GM12878 (cell line): ENCODE measurements at regions of chr18 and their contacts with region 1.

Region 1: GRCh38 chr18:35478520-35479435 is 19.0 kb downstream of the INO80C start:
- DNase-seq: no peak
- ATAC-seq: peak; percentile 88
- H3K4me3 ChIP-seq: no peak overlapping the region
- H3K27ac ChIP-seq: no peak overlapping the region
- H3K4me1 ChIP-seq: no peaks in the 10 kb centered on the region
- H3K27me3 ChIP-seq: no peaks in the 10 kb centered on the region
- CTCF ChIP-seq: no peak
- EP300 ChIP-seq: no peak
- POLR2A ChIP-seq: no peak
- RAD21 ChIP-seq: no peak

Region 2: GRCh38 chr18:35415511-35416073 is 63.2 kb before region 1 on chr18:
- CTCF ChIA-PET with region 1: interaction called, 11 read pairs
- POLR2A ChIA-PET with region 1: interaction called, 8 read pairs
- RAD21 ChIA-PET with region 1: interaction called, 9 read pairs
- SMC1A ChIA-PET with region 1: interaction called, 29 read pairs
- in situ Hi-C with region 1: no loop called
- intact Hi-C with region 1: no loop called
- DNase-seq: no peak
- ATAC-seq: peak; percentile 71
- H3K4me3 ChIP-seq: peak overlapping the region; percentile 8; the same call in 1 of the 2 replicates
- H3K27ac ChIP-seq: peak overlapping the region; percentile 51
- H3K4me1 ChIP-seq: peaks cover 27% of the 10 kb centered on the region
- H3K27me3 ChIP-seq: no peaks in the 10 kb centered on the region
- CTCF ChIP-seq: no peak
- EP300 ChIP-seq: no peak
- POLR2A ChIP-seq: no peak
- RAD21 ChIP-seq: no peak

Region 3: GRCh38 chr18:35435401-35435800 is 43.4 kb before region 1 on chr18:
- CTCF ChIA-PET with region 1: no interaction called
- POLR2A ChIA-PET with region 1: no interaction called
- RAD21 ChIA-PET with region 1: no interaction called
- SMC1A ChIA-PET with region 1: no interaction called
- in situ Hi-C with region 1: no loop called
- intact Hi-C with region 1: no loop called
- DNase-seq: no peak
- ATAC-seq: no peak
- H3K4me3 ChIP-seq: no peak overlapping the region
- H3K27ac ChIP-seq: no peak overlapping the region
- H3K4me1 ChIP-seq: no peaks in the 10 kb centered on the region
- H3K27me3 ChIP-seq: no peaks in the 10 kb centered on the region
- CTCF ChIP-seq: no peak
- EP300 ChIP-seq: no peak
- POLR2A ChIP-seq: no peak
- RAD21 ChIP-seq: no peak

Region 4: GRCh38 chr18:35467624-35468016 is 11.2 kb before region 1 on chr18:
- CTCF ChIA-PET with region 1: interaction called, 12 read pairs
- POLR2A ChIA-PET with region 1: interaction called, 18 read pairs
- RAD21 ChIA-PET with region 1: interaction called, 13 read pairs
- SMC1A ChIA-PET with region 1: interaction called, 67 read pairs
- in situ Hi-C with region 1: no loop called
- intact Hi-C with region 1: no loop called
- DNase-seq: peak; percentile 19
- ATAC-seq: peak; percentile 87
- H3K4me3 ChIP-seq: no peak overlapping the region
- H3K27ac ChIP-seq: no peak overlapping the region
- H3K4me1 ChIP-seq: peaks cover 17% of the 10 kb centered on the region
- H3K27me3 ChIP-seq: no peaks in the 10 kb centered on the region
- CTCF ChIP-seq: no peak
- EP300 ChIP-seq: no peak
- POLR2A ChIP-seq: no peak
- RAD21 ChIP-seq: no peak

Region 5: DNA sequence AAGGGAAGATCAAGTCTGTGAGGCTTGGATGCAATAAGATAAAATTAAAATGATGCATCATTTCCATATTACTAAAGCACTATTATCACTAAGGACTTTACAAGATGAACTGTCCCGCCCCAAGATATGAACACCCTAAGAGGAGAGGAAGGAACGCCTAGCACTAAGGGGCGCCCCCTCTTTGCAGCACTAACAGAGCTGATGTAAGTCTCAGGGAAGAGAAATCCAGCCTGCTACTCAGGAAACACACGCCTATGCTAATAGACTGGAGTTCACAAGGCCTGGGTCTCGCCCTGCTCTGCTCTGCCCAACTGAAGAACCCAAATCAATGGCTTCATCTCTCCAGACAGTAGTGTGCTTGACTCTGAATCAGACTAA is 12.9 kb after region 1 on chr18:
- CTCF ChIA-PET with region 1: interaction called, 13 read pairs
- POLR2A ChIA-PET with region 1: interaction called, 106 read pairs
- RAD21 ChIA-PET with region 1: interaction called, 57 read pairs
- SMC1A ChIA-PET with region 1: interaction called, 122 read pairs
- in situ Hi-C with region 1: no loop called
- intact Hi-C with region 1: no loop called
- DNase-seq: no peak
- ATAC-seq: peak; percentile 9; the same call in 1 of the 3 replicates
- H3K4me3 ChIP-seq: no peak overlapping the region
- H3K27ac ChIP-seq: no peak overlapping the region
- H3K4me1 ChIP-seq: no peaks in the 10 kb centered on the region; the same call in 1 of the 2 replicates
- H3K27me3 ChIP-seq: no peaks in the 10 kb centered on the region
- CTCF ChIP-seq: no peak
- EP300 ChIP-seq: no peak
- POLR2A ChIP-seq: no peak
- RAD21 ChIP-seq: no peak

Region 6: DNA sequence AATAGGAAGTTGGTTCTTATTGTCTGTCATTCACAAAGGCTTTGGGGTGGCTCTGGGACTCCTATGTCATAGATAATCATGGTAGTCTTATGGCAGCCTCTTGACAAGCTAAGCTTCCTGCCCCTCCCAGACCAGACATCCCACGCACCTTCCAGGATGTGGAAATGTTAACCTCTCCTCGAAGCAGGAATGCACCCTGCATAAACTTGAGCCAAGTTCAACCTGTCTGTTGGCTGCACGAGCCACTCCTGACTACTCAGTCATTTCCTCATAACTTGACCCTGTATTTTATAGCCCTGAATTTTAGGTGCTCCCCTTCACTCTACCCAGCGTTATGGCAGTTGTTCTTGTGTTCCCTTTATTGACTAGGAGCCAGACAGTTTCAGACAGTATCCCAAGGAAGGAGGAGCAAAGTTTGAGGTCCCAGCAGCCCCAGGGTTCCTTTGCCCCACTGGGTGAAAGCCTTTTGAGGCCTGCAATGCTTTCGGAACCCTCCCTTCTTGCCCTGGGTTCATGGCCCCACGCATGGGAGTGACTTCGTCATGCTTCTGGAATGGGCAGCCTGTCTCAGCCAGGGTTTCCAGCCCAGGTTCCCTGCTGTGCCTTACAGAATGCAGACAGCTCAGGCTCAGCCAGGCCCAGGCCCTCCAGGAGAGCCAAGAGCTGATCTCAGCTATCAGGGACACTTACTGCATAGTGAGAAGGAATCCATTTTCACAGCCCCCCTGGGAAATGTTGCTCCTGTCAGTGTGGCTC is 34.6 kb after region 1 on chr18:
- CTCF ChIA-PET with region 1: interaction called, 3 read pairs
- POLR2A ChIA-PET with region 1: interaction called, 4 read pairs
- RAD21 ChIA-PET with region 1: interaction called, 7 read pairs
- SMC1A ChIA-PET with region 1: interaction called, 12 read pairs
- in situ Hi-C with region 1: no loop called
- intact Hi-C with region 1: no loop called
- DNase-seq: no peak
- ATAC-seq: no peak
- H3K4me3 ChIP-seq: no peak overlapping the region
- H3K27ac ChIP-seq: no peak overlapping the region
- H3K4me1 ChIP-seq: peaks cover 8% of the 10 kb centered on the region
- H3K27me3 ChIP-seq: no peaks in the 10 kb centered on the region
- CTCF ChIP-seq: no peak
- EP300 ChIP-seq: no peak
- POLR2A ChIP-seq: no peak
- RAD21 ChIP-seq: no peak